ENCODE measurements at regions of chr7 and their contacts with region 1.

Region 1: GRCh38 chr7:8201846-8202441 is 60.0 kb downstream of the ICA1 start:
- DNase-seq: no peak
- H3K4me3 Mint-ChIP-seq: no peak overlapping the region
- H3K27ac Mint-ChIP-seq: peak overlapping the region; percentile 55
- H3K4me1 Mint-ChIP-seq: peaks cover 70% of the 10 kb centered on the region
- H3K27me3 Mint-ChIP-seq: peaks cover 6% of the 10 kb centered on the region

Region 2: DNA sequence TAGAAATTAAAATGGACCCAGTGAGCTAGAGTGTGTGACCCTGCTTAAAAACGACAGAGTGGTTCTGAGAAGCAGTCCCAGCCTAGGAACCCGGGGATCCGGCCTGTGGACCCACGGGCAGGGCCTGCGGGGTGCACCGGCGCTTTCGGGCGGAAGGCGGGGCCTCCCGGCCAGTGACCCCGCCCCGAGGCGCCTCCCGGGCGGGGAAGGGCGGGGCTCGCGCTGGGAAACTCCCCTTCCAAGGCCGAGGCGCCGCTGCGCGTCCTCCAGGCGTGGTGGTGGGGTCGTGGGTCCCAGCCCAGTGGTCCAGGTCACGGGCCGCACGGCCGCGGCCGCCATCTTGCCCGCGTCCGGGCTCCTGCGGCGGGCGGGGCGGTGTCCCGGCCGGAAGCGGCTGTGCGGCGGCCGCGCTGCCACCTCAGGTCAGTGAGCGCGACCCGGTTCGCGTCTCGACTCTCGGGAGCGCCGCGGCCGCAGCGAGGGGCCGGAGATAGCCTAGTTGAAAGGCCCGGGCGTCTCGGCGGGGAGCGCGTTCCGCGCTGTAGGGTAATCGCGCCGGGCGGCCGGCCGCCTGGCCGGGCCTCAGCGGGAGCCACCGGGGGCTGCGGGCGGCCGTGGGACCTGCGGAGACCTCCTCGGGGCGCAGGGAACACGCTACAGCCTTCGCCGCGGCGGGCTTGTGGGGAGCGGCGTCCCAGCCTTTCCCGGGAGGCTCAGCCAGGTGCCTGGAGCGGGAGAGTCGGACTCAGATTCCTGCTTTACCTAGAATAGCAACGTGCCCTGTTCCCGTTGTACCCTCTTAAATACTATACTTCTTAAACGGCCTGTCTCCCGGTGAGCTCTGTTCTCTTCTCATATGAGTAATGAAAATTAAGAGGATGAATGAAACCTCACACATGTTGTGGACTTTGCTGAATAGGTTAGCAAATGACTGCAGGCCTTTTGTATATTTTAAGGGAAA is 635.0 kb before region 1 on chr7 and contains the start of gene MIOS:
- intact Hi-C with region 1: loop called (anchors 5 kb)
- DNase-seq: peak; percentile 76
- H3K4me3 Mint-ChIP-seq: peak within 1 kb of the TSS; percentile 76
- H3K27ac Mint-ChIP-seq: peak within 1 kb of the TSS; percentile 61
- H3K4me1 Mint-ChIP-seq: peaks cover 27% of the 10 kb centered on the region
- H3K27me3 Mint-ChIP-seq: peaks cover 9% of the 10 kb centered on the region
- total RNA-seq, gene MIOS: 29.8 and 30.3 TPM in 2 replicates

Region 3: DNA sequence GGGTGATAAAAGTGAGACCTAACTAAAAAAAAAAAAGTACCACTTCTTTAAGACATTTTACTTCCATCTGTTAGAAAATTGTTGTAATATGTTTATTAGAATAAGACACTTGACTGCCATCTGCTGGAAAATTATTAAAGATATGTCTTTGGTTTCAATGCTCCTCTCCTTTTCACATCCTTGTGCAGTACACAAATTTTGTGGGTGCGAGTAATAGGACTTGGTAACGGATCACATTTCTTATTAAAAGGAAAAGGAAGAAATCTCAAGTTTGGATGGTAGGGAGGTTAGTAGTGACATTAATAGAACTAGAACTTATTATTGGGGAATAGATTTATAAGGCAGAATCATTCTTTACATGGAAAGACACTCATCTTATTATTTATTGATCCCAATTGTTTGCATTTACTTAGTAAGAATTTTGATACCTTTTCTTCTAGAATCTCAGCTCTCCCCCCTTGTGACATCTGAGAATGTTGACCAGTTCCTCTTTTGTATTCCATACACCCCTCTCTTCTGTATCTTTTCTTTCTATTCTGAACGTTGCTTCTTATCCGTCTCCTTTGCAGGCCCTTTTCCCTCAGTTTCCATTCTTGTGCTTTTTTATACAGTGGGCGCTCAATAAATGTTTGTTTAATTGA is 440.5 kb before region 1 on chr7:
- intact Hi-C with region 1: loop called (anchors 5 kb)
- DNase-seq: no peak
- H3K4me3 Mint-ChIP-seq: peak overlapping the region; percentile 86
- H3K27ac Mint-ChIP-seq: peak overlapping the region; percentile 83
- H3K4me1 Mint-ChIP-seq: peaks cover 38% of the 10 kb centered on the region
- H3K27me3 Mint-ChIP-seq: no peaks in the 10 kb centered on the region

Region 4: DNA sequence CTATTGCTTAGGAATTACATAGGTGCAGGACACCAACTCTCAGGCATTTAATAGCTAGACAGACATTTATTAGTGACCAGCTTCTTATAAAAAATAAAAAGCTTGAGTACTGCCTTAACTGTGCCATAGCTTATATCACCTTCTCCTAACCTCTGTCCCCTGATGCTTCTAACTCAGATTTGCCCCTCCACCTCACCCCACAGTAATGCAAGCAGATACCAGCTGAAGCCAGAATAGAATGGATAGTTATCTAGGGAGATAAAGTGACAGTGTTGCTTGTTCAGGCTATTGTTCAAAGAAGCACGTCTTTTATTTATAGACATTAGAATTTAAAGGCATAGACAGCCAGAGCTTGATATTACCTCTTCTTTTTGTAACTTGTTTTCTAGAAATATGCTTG is 332.9 kb before region 1 on chr7:
- intact Hi-C with region 1: no loop called
- DNase-seq: no peak
- H3K4me3 Mint-ChIP-seq: no peak overlapping the region
- H3K27ac Mint-ChIP-seq: no peak overlapping the region
- H3K4me1 Mint-ChIP-seq: no peaks in the 10 kb centered on the region
- H3K27me3 Mint-ChIP-seq: no peaks in the 10 kb centered on the region

Region 5: DNA sequence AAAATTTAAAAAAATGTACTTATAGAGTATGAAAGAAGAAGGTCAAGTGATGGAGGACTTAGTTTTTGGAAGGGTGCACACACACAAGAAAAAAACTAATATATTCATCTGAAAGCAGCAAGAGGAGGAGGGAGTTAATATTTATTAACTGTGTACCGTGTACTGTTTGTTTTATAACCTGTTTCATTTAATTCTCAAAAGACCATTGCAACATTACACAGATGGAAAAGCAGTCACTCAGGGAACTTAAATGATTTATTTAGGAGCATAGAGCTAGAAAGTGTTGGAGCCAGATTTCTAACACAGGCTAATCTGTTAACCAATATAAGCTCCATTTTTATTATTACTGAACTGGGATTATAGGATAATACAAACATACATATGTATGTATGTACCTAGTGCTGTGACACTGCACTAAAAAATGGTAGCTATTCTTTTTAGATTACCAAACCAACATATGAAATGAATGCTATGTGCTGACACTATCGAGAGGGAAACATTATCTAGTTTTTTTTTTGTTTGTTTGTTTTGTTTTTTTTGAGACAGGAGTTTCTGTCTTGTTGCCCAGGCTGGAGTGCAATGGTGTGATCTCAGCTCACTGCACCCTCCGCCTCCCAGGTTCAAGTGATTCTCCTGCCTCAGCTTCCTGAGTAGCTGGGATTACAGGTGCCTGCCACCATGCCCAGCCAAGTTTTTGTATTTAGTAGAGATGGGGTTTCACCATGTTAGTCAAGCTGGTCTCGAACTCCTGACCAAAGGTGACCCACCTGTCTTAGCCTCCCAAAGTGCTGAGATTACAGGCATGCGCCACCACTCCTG is 196.5 kb before region 1 on chr7:
- intact Hi-C with region 1: no loop called
- DNase-seq: no peak
- H3K4me3 Mint-ChIP-seq: no peak overlapping the region
- H3K27ac Mint-ChIP-seq: no peak overlapping the region
- H3K4me1 Mint-ChIP-seq: peaks cover 9% of the 10 kb centered on the region
- H3K27me3 Mint-ChIP-seq: no peaks in the 10 kb centered on the region

Region 6: GRCh38 chr7:8134089-8134733 is 67.7 kb before region 1 on chr7:
- intact Hi-C with region 1: loop called (anchors 1 kb)
- DNase-seq: peak; percentile 30
- H3K4me3 Mint-ChIP-seq: peak overlapping the region; percentile 1
- H3K27ac Mint-ChIP-seq: peak overlapping the region; percentile 87
- H3K4me1 Mint-ChIP-seq: peaks cover 61% of the 10 kb centered on the region
- H3K27me3 Mint-ChIP-seq: no peaks in the 10 kb centered on the region

Region 7: DNA sequence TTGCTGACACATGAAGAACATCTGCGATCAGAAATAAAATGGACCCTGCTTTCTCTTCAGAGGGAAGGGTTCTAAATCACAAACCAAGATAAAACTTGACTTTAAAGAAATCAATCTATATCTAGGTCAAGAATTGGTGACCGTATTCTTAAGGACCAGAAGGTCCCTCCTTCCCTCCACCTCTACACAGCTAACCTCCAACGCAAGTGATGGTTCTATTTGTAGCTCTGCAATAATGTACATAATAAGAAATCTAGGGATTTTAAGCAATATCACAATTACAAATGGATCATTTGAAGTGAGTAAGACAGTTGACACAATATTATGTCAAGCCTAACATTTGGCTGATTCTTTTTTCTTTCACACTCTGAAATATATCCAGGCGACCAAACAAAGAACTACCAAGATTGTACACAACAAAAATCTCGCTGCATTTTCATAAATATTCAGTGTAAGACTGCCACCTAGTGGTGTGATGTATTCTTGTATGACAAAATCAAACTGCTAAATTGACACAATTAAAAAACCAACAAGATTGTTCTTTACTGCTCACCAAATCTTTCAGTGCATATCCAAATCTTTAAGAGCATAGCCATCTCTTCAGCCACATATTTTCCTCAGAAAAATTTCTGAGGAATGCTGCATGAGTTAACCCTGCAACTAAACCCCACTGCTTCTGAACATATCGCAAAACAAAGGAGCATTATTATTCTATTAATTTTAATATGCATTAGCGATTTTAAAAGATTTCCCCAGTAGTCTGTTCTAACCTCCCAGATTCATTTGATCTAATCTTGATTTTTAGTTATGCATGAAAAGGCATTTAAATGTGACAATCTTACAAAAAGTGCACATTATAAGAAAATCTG is 15.5 kb after region 1 on chr7:
- intact Hi-C with region 1: loop called (anchors 1 kb)
- DNase-seq: no peak
- H3K4me3 Mint-ChIP-seq: no peak overlapping the region
- H3K27ac Mint-ChIP-seq: no peak overlapping the region
- H3K4me1 Mint-ChIP-seq: peaks cover 34% of the 10 kb centered on the region
- H3K27me3 Mint-ChIP-seq: no peaks in the 10 kb centered on the region

Region 8: GRCh38 chr7:8404079-8404478 is 202.1 kb after region 1 on chr7:
- intact Hi-C with region 1: no loop called
- DNase-seq: no peak
- H3K4me3 Mint-ChIP-seq: no peak overlapping the region
- H3K27ac Mint-ChIP-seq: no peak overlapping the region
- H3K4me1 Mint-ChIP-seq: no peaks in the 10 kb centered on the region
- H3K27me3 Mint-ChIP-seq: peaks cover 1% of the 10 kb centered on the region